ENCODE measurements at regions of chr20 and their contacts with region 1.

Region 1: GRCh38 chr20:18213002-18213401 is 75.3 kb upstream of the ZNF133 start:
- DNase-seq: no peak
- H3K4me3 ChIP-seq: no peak overlapping the region
- H3K27ac ChIP-seq: no peak overlapping the region
- H3K4me1 ChIP-seq: no peaks in the 10 kb centered on the region
- H3K27me3 ChIP-seq: no peaks in the 10 kb centered on the region
- CTCF ChIP-seq: no peak

Region 2: DNA sequence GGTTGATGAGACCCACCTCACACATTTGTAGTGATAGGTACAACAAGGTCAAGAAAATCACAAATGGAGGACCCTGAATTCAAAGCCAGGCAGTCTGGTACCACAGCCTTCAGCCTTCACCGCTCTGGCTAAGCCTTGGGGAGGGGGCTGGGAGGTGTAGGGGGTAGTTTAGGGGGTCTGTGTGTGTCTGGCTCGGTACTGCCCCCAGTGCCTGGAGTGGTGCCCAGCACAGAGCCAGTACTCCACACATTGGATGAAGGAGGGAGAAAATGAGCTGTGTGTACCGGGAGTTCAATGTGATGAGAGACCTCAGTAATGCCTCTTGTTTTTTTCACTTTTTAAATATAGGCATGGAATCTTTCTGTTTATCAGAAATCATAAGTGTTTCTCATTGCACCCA is 22.2 kb before region 1 on chr20:
- intact Hi-C with region 1: loop called (anchors 2 kb)
- DNase-seq: no peak
- H3K4me3 ChIP-seq: no peak overlapping the region
- H3K27ac ChIP-seq: no peak overlapping the region
- H3K4me1 ChIP-seq: no peaks in the 10 kb centered on the region
- H3K27me3 ChIP-seq: no peaks in the 10 kb centered on the region
- CTCF ChIP-seq: no peak

Region 3: GRCh38 chr20:18276821-18277220 is 63.8 kb after region 1 on chr20:
- intact Hi-C with region 1: no loop called
- DNase-seq: peak; percentile 37
- H3K4me3 ChIP-seq: no peak overlapping the region
- H3K27ac ChIP-seq: no peak overlapping the region
- H3K4me1 ChIP-seq: no peaks in the 10 kb centered on the region
- H3K27me3 ChIP-seq: peaks cover 89% of the 10 kb centered on the region
- CTCF ChIP-seq: peak; percentile 74

Measured in left ventricle myocardium inferior (tissue), 1 donor.